Ovary (tissue), 10 donors: ENCODE measurements at regions of chr12 and their contacts with region 1.

Region 1: GRCh38 chr12:132748319-132748718 is 13.3 kb downstream of the ANKLE2 start:
- DNase-seq: no peak
- H3K4me3 ChIP-seq: no peak overlapping the region
- H3K27ac ChIP-seq: no peak overlapping the region
- H3K4me1 ChIP-seq: no peaks in the 10 kb centered on the region
- H3K27me3 ChIP-seq: no peaks in the 10 kb centered on the region
- CTCF ChIP-seq: no peak
- EP300 ChIP-seq: no peak
- POLR2A ChIP-seq: no peak

Region 2: GRCh38 chr12:132400011-132400641 is 348.2 kb before region 1 on chr12:
- intact Hi-C with region 1: loop called in 1 of 4 experiments (anchors 5 kb)
- DNase-seq: peak in 1 of 5 donors; percentile 7
- H3K4me3 ChIP-seq: no peak overlapping the region
- H3K27ac ChIP-seq: no peak overlapping the region
- H3K4me1 ChIP-seq: no peaks in the 10 kb centered on the region
- H3K27me3 ChIP-seq: no peaks in the 10 kb centered on the region
- CTCF ChIP-seq: no peak
- EP300 ChIP-seq: no peak
- POLR2A ChIP-seq: no peak

Region 3: GRCh38 chr12:132529906-132530305 is 218.4 kb before region 1 on chr12:
- intact Hi-C with region 1: no loop called
- DNase-seq: no peak
- H3K4me3 ChIP-seq: no peak overlapping the region
- H3K27ac ChIP-seq: no peak overlapping the region
- H3K4me1 ChIP-seq: no peaks in the 10 kb centered on the region
- H3K27me3 ChIP-seq: no peaks in the 10 kb centered on the region
- CTCF ChIP-seq: no peak
- EP300 ChIP-seq: no peak
- POLR2A ChIP-seq: no peak